Vagina (tissue), 2 donors: ENCODE measurements at regions of chr22 and their contacts with region 1.

Region 1: GRCh38 chr22:29837780-29838598 is at the start of gene ASCC2:
- DNase-seq: peak; percentile 98
- H3K4me3 ChIP-seq: peak within 1 kb of the TSS; percentile 78 to 86
- H3K27ac ChIP-seq: peak within 1 kb of the TSS; percentile 67
- H3K4me1 ChIP-seq: peaks cover 23% of the 10 kb centered on the region
- H3K27me3 ChIP-seq: no peaks in the 10 kb centered on the region
- CTCF ChIP-seq: no peak
- POLR2A ChIP-seq: peak in 1 of 2 donors; percentile 52
- total RNA-seq, gene ASCC2: 62.6 TPM

Region 2: DNA sequence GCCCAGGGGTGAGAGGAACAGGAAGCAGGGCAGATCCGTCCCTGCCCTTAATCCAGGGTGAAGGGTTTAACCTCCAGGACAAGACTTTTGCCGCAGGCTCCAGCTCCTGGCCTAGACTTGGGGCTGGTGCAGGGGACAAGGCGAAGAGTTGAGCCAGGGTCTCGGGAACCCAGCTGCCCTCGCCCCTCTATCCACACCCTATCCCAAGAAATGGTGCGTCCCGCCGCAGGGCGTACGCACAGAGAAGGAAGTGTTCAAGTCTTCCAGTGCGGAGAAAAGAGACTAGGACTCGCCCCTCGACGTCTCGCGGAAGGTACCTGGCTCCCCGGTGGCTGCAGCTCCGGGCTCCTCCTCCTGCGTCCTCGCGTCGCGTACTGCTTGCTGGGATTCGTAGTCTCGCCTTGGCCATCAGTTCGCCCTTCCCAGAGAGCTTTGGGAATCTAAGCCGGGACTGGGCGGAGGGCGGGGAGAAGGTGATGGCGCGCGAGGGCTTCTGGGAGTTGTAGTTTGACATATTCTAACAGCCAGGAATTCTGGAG is 71.3 kb before region 1 on chr22 and contains the start of gene ZMAT5:
- intact Hi-C with region 1: loop called (anchors 10 kb)
- DNase-seq: peak in 1 of 2 donors; percentile 94
- H3K4me3 ChIP-seq: peak within 1 kb of the TSS; percentile 72 to 77
- H3K27ac ChIP-seq: peak within 1 kb of the TSS; percentile 79
- H3K4me1 ChIP-seq: peaks cover 35% of the 10 kb centered on the region
- H3K27me3 ChIP-seq: no peaks in the 10 kb centered on the region
- CTCF ChIP-seq: no peak
- POLR2A ChIP-seq: no peak
- total RNA-seq, gene ZMAT5: 22.6 TPM

Region 3: GRCh38 chr22:29780748-29781676 is 57.0 kb before region 1 on chr22:
- intact Hi-C with region 1: no loop called
- DNase-seq: no peak
- H3K4me3 ChIP-seq: no peak overlapping the region
- H3K27ac ChIP-seq: peak overlapping the region; percentile 31
- H3K4me1 ChIP-seq: peaks cover 38% of the 10 kb centered on the region
- H3K27me3 ChIP-seq: no peaks in the 10 kb centered on the region
- CTCF ChIP-seq: no peak
- POLR2A ChIP-seq: no peak